ENCODE measurements at regions of chr20 and their contacts with region 1.

Region 1: GRCh38 chr20:52552181-52552872 is 360.7 kb upstream of the ZFP64 start:
- DNase-seq: no peak
- ATAC-seq: 0 out of 2 replicates have a peak, but pooled peaks have one; percentile 26
- H3K4me3 Mint-ChIP-seq: no peak overlapping the region
- H3K27ac Mint-ChIP-seq: no peak overlapping the region
- H3K4me1 Mint-ChIP-seq: peaks cover 3% of the 10 kb centered on the region; the same call in 1 of the 2 replicates
- H3K27me3 Mint-ChIP-seq: no peaks in the 10 kb centered on the region
- CTCF ChIP-seq: no peak

Region 2: DNA sequence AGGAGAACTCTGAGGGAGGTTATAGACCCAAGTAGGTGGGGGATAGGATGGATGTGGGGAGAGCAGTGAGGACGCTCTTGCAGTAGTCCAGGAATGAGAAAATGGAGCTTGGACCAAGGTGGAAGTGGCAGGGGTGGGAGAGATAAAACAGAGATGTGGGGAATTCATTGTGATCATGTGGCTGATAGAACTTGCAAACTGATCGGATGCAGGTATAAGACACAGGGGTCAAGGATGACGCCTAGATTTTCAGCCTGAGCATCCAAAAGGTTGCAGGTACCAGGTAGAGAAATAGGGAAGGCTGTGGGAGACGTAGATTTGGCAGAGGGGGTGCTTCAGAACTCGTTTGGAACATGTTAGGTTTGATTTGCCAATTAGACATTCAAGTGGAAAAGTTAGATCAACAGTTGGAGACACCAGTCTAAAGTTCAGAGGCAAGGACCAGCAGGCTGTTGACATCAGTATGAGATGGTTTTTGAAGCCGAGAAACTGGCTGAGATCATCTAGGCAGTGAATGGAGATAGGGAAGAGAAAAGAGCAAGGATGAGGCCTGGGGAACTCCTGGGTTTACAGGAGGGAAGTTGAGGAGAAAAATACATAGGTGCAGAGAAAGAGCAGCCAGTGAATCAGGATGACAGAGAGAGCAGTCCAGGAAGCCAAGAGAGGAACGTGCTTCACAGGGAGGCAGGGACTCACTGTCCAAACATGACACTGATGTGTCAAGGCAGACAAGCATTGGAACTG is 737.1 kb before region 1 on chr20:
- CTCF ChIA-PET with region 1: no interaction called
- POLR2A ChIA-PET with region 1: interaction called, 11 read pairs
- DNase-seq: no peak
- ATAC-seq: no peak
- H3K4me3 Mint-ChIP-seq: no peak overlapping the region
- H3K27ac Mint-ChIP-seq: peak overlapping the region; percentile 20; the same call in 1 of the 2 replicates
- H3K4me1 Mint-ChIP-seq: peaks cover 28% of the 10 kb centered on the region
- H3K27me3 Mint-ChIP-seq: no peaks in the 10 kb centered on the region; the same call in none of the 2 replicates
- CTCF ChIP-seq: no peak

Region 3: DNA sequence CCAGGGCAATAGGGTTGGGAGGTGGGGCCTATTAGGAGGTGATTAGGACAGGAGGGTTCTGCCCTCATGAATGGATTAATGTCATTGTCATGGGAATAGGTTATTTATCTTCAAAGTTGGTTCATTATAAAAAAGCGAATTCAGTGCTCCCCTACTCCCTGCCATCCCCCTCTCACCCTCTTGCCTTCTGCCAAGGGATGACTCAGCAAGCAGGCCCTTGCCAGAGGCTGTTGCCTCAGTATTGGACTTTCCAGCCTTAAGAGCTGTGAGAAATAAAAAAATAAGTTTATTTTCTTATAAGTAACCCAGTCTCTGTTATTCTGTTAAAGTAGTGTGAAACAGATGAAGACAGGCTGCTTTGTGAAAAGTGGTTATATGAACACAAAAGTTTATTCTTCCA is 20.4 kb after region 1 on chr20:
- CTCF ChIA-PET with region 1: no interaction called
- POLR2A ChIA-PET with region 1: no interaction called
- DNase-seq: no peak
- ATAC-seq: no peak
- H3K4me3 Mint-ChIP-seq: no peak overlapping the region
- H3K27ac Mint-ChIP-seq: no peak overlapping the region
- H3K4me1 Mint-ChIP-seq: no peaks in the 10 kb centered on the region
- H3K27me3 Mint-ChIP-seq: no peaks in the 10 kb centered on the region; the same call in 1 of the 2 replicates
- CTCF ChIP-seq: no peak

Region 4: GRCh38 chr20:52768694-52769093 is 216.4 kb after region 1 on chr20:
- CTCF ChIA-PET with region 1: no interaction called
- POLR2A ChIA-PET with region 1: no interaction called
- DNase-seq: no peak
- ATAC-seq: no peak
- H3K4me3 Mint-ChIP-seq: no peak overlapping the region
- H3K27ac Mint-ChIP-seq: no peak overlapping the region
- H3K4me1 Mint-ChIP-seq: no peaks in the 10 kb centered on the region
- H3K27me3 Mint-ChIP-seq: no peaks in the 10 kb centered on the region; the same call in 1 of the 2 replicates
- CTCF ChIP-seq: no peak

Measured in WTC11 (cell line).